ENCODE measurements at regions of chr19 and their contacts with region 1.

Region 1: GRCh38 chr19:42794765-42795164 is 29.3 kb upstream of the PSG8 start:
- DNase-seq: no peak
- H3K4me3 ChIP-seq: no peak overlapping the region
- H3K27ac ChIP-seq: no peak overlapping the region
- H3K4me1 ChIP-seq: peaks cover 2% of the 10 kb centered on the region
- H3K27me3 ChIP-seq: no peaks in the 10 kb centered on the region
- CTCF ChIP-seq: no peak

Region 2: DNA sequence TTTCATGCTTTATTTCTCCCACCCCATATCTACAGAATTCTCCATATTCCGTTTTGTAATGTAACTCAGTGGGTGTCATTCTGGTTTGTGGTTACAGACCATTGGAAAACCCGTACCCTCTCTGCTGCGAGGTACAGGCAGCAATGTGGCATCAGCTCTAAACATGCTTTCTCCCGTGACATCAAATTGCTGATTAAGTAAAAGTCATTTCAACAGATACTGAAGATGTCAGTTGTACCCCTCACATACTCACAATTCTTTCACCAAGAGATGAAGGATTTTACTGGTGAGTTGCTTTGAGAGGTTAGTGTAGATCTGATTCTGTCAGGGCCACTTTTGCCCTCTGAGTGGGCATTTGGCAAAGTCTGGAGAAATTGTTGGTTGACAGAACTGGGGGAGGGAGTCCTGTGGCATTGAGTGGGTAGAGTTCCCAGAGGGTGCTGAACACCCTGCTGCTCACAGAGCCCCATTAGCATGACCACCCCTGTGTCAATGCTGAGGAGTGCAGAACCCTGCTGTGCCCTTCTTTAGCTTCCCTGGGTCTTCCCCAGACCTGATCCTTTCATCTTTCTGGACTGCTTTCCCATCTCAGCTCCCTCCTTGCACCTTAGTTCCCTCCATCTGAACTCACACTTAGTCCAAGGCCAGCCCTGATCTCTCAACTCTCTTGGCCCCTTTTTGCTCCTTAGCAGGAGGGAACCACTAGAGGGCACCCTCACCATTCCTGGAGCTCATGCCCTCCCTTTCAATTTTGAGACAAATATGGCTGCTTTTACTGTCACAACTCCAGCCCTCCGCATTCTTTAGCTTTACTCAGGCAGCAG is 160.1 kb before region 1 on chr19:
- CTCF ChIA-PET with region 1: no interaction called
- dilution Hi-C with region 1: no loop called
- in situ Hi-C with region 1: no loop called
- intact Hi-C with region 1: loop called (anchors 1 kb)
- DNase-seq: peak; percentile 34
- H3K4me3 ChIP-seq: no peak overlapping the region
- H3K27ac ChIP-seq: no peak overlapping the region
- H3K4me1 ChIP-seq: no peaks in the 10 kb centered on the region
- H3K27me3 ChIP-seq: peaks cover 2% of the 10 kb centered on the region
- CTCF ChIP-seq: peak; percentile 88 to 89

Region 3: DNA sequence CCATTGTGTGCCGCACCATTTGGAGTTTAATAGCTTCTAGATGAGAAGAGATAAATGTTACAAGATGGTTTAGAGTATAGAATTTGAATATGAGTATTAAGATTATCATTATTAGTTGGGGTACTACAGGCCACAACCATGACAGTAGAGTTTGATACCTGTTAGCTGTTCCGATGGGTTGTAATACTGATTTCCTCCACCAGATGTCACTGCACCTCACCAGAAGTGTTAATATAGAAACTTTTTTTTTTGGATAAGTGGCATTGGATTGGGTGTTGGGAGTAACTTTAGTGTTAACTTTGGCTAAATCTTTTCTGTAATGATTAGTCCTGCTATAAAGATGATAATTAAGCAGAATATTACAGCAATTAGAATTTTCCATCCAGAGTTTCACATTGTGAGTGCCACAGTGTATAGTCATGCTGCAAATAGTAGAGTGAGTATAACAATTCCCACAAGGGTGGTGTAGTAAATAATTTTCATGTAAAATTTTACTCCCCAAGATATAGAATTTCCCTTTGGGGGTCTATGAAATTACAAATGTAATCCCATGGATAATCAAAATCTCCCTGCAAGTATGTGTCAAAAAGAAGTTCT is 110.8 kb before region 1 on chr19:
- CTCF ChIA-PET with region 1: no interaction called
- dilution Hi-C with region 1: no loop called
- in situ Hi-C with region 1: no loop called
- intact Hi-C with region 1: no loop called
- DNase-seq: peak; percentile 11
- H3K4me3 ChIP-seq: no peak overlapping the region
- H3K27ac ChIP-seq: no peak overlapping the region
- H3K4me1 ChIP-seq: no peaks in the 10 kb centered on the region
- H3K27me3 ChIP-seq: peaks cover 3% of the 10 kb centered on the region
- CTCF ChIP-seq: peak; percentile 69 to 73

Region 4: GRCh38 chr19:42762782-42763181 is 32.0 kb before region 1 on chr19:
- CTCF ChIA-PET with region 1: no interaction called
- dilution Hi-C with region 1: no loop called
- in situ Hi-C with region 1: no loop called
- intact Hi-C with region 1: no loop called
- DNase-seq: peak; percentile 32
- H3K4me3 ChIP-seq: no peak overlapping the region
- H3K27ac ChIP-seq: peak overlapping the region; percentile 22
- H3K4me1 ChIP-seq: peaks cover 18% of the 10 kb centered on the region
- H3K27me3 ChIP-seq: no peaks in the 10 kb centered on the region
- CTCF ChIP-seq: no peak

Region 5: DNA sequence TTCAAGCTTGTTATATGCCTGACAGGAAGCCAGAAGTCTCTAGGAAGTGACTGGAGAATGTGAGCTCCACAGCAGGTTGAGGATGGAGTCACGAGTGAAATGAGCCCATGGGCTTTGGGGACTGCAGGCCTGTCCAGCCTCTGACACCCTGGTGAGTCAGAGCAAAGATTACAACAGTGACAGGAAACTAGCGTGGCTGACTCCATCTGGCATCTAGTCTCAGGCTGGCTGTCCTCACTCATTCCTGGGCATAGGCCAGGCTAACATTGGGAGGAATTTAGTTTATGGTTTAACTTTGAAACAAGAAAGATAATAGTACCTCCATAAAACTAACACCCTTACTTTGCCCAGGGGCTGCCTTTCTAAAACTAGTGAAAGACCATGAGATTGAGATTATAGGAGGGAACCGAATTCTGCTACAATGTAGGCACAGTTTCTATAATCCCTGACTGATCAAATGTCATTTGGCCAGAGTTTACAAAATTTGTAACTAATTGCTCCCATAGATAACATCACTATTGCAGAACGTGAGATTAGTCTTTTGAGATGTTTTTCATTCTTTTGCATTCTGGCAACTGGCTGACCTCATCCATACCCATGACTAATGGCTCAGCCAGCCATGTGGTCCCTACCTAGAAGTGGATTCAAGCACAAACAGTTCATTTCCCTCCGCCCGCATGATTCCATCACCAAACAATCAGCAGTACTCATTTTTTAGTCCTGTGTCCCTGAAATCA is 56.4 kb after region 1 on chr19:
- CTCF ChIA-PET with region 1: no interaction called
- dilution Hi-C with region 1: no loop called
- in situ Hi-C with region 1: loop called in 1 of 2 experiments (anchors 10 kb)
- intact Hi-C with region 1: no loop called
- DNase-seq: peak; percentile 90
- H3K4me3 ChIP-seq: no peak overlapping the region
- H3K27ac ChIP-seq: peak overlapping the region; percentile 95
- H3K4me1 ChIP-seq: peaks cover 37% of the 10 kb centered on the region
- H3K27me3 ChIP-seq: no peaks in the 10 kb centered on the region
- CTCF ChIP-seq: no peak

Region 6: DNA sequence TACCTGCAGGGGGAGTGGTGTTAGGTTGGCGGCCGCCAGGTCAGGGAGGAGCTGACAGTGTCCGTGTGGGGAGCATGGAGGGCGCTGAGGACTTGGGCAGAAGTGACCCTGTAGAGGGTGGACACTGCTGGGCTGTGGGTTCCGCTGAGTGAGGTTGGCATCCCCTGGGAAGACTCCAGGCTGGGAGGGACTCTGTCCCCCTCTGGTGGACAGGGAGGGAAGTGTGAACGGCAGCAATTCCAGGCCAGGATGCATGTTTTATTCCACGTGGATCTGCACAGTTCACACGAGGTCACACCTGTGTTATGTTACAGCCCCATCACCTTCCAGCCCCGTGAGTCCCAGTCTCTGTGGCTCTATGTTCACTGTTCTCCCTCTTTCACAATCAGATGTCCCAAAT is 86.5 kb after region 1 on chr19:
- CTCF ChIA-PET with region 1: interaction called, 4 read pairs
- dilution Hi-C with region 1: no loop called
- in situ Hi-C with region 1: no loop called
- intact Hi-C with region 1: loop called (anchors 1 kb)
- DNase-seq: no peak
- H3K4me3 ChIP-seq: no peak overlapping the region
- H3K27ac ChIP-seq: no peak overlapping the region
- H3K4me1 ChIP-seq: peaks cover 26% of the 10 kb centered on the region
- H3K27me3 ChIP-seq: no peaks in the 10 kb centered on the region
- CTCF ChIP-seq: peak; percentile 58 to 73

Region 7: DNA sequence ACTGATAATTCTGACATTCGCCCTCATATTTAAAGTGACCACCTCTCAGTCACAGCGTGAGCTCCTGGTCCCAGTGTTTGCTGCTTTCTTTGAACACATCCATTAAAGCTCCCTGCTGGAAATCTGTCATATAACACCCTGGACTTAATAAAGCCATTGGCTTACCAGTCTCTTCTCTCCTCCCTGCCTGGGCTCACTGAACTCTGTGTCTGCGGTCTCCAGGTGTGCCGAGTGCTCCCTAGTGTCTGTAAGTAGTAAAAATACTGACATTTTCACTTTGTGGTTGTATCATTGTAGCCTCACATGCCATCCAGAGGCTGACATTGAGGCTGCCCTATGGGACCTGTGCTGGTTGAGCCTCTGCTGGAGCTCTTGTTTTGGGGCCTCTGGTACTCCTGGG is 234.1 kb after region 1 on chr19:
- CTCF ChIA-PET with region 1: no interaction called
- dilution Hi-C with region 1: no loop called
- in situ Hi-C with region 1: no loop called
- intact Hi-C with region 1: loop called (anchors 2 kb)
- DNase-seq: no peak
- H3K4me3 ChIP-seq: no peak overlapping the region
- H3K27ac ChIP-seq: no peak overlapping the region
- H3K4me1 ChIP-seq: peaks cover 3% of the 10 kb centered on the region
- H3K27me3 ChIP-seq: no peaks in the 10 kb centered on the region
- CTCF ChIP-seq: no peak

Measured in mammary epithelial cell (primary cell).